ENCODE measurements at regions of chr18 and their contacts with region 1.

Region 1: DNA sequence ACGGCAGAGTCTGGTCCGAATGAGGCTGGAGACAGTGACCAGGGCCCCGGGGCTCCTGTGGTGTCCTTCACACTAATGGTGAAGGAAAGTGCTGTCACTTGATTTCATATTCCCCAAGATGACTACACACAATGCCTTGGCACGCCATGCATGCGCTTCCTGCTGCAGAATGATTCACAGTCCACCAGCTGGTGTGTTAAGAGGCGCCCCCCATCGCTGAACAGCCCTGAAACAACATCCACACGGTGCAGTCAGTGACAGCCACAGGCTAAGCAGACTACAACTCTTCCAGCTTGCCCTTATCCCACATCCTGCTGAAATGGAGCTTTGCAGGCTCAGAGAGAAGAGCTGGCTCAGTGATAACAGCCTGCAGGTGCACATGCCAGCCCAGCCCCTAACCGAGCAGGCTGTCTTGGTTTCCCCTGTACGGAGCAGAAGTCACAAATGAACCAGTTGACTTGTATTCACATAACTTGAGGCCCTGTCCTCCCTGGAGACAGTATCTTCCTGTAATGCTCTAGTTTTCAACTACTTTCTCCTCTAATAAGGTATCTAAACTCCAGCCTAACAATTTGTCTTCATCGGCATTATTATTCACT is 24.3 kb upstream of the CDH20 start:
- DNase-seq: no peak
- ATAC-seq: no peak
- H3K4me3 ChIP-seq: no peak overlapping the region
- H3K27ac ChIP-seq: no peak overlapping the region
- H3K4me1 ChIP-seq: no peaks in the 10 kb centered on the region
- H3K27me3 ChIP-seq: no peaks in the 10 kb centered on the region
- CTCF ChIP-seq: no peak
- POLR2A ChIP-seq: no peak

Region 2: DNA sequence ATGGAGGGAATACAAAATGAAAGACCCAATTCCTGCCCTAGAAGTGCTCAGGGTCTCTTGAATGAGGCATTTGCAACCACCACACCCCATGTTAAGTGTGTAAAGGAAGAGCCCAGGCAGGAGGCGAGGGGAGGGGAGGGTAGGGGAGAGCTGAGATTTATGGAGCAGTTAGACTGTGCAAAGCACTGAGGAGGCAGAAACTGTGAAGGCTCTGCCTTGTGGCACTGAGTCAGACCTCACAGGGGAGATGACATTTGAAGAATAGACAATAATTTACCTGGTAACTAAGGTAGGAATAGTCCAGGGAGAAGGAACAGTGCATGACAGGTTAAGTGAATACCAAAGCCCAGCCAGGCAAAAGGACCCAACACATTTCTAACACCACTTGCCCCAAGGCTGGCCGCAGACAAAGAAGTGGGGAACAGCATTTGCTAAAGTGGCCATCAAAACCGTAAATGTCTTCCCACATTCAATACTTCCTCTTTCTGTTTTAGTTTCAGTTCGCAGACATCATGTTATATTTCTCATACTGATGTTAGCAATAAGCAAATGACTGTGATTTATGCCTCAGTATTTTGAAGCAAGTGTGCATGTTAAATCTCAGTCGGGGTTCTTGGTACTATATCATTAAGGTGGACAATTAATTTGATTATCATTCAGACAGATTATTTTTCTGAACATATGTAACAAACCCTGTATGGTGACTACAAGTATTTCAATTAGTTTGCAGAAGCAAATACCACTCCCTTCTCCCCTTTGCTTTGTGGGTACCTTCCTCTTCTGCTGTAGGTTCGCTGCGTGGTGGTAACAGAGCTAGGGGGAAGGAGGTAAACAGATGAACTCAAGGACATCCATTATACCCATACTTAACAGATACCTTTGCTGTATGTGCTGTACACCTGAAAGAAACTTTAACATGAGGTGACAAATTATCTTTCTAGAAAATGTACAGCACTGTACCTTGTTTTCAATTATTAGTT is 51.8 kb after region 1 on chr18:
- intact Hi-C with region 1: loop called in 1 of 10 experiments (anchors 10 kb)
- DNase-seq: no peak
- ATAC-seq: no peak
- H3K4me3 ChIP-seq: no peak overlapping the region
- H3K27ac ChIP-seq: no peak overlapping the region
- H3K4me1 ChIP-seq: no peaks in the 10 kb centered on the region
- H3K27me3 ChIP-seq: peaks cover 0 to 7% (median 0%) of the 10 kb centered on the region in 9 donors
- CTCF ChIP-seq: no peak
- POLR2A ChIP-seq: no peak

Region 3: DNA sequence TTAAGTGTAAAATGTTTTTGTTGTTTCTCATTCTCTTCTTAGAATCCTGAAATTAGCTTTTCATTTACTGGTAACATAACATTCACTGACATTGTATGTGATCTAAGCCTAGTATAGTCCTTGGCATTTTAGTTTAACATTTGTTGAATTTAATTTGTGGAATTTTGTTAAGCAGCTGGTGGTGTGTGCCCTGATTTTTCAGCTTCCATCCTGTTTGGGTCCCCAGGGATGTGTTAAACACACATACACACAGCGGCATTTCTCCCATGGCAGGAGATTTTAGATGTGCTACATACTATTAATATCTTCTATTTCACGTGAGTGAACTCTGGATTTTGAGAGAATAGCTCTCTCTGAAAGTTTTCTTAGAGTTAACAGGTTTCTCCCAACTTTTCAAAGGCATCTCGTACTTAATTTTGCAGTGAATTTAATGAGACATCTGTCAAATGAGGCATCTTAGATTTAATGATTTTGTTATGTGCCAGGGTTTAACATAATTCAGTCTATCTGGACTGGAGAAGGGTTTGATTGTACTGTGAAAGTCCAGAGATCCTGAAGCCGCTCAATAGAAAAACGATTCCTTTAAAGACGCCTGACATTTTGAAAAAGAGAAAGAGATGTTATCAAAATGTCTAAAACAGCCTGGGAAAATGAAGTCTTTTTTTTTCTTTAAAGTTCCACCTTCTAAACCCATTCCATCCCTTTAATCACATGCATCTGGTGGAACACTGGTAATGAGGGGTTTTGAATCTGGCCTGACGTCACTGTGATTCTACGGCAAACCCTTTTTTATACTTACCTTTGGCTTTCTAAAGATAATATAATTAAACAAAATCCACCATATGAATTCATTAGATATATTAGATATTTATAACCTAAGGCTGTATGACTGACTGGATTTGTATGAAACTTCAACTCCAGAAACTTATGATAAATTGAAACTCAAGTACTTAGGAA is 1413.2 kb after region 1 on chr18:
- intact Hi-C with region 1: no loop called
- DNase-seq: no peak
- ATAC-seq: peak in 1 of 4 donors; percentile 46
- H3K4me3 ChIP-seq: peak overlapping the region in 5 of 12 donors; percentile 0 to 6 (median 4)
- H3K27ac ChIP-seq: peak overlapping the region in 5 of 12 donors; percentile 1 to 55 (median 14)
- H3K4me1 ChIP-seq: peaks cover 0 to 73% (median 44%) of the 10 kb centered on the region in 12 donors
- H3K27me3 ChIP-seq: no peaks in the 10 kb centered on the region
- CTCF ChIP-seq: no peak
- POLR2A ChIP-seq: no peak